ENCODE measurements at regions of chr11 and their contacts with region 1.

Region 1: DNA sequence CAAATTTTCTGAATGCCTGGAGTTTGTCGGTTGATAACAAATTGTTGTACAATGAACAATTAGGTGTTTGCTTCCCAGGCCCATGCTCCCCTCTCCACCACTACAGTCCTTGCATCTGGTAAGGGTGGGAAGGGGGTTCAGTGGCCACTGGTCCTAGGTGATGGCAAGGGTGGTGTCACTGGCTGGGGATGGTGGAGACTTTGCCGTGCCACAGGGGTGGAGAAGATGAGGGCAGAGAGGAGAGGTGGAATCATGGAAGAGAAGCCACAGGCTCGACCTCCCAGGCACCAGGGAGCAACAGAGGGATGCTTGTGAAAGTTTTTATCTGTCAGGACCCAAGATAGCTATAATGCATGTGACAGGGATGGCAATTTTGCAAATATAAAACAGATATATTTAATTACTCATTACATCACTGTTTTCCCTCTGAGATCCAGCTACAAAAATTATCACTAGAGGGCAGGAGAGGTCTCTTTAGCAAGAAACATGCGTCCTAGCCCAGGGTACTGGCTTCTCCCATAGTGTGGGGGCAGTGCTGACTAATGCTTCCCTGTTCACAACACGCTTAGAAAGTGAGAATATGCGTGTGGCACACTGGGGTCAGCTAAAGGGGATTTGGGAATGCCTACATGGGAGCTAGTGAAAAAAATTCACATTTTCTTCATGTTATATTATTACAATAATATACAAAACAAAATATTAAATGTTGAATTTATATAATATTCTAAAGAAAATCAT is 49.0 kb upstream of the AMPD3 start:
- DNase-seq: peak; percentile 58
- ATAC-seq: peak; percentile 77
- H3K4me3 Mint-ChIP-seq: no peak overlapping the region
- H3K27ac Mint-ChIP-seq: no peak overlapping the region
- H3K4me1 Mint-ChIP-seq: peaks cover 16% of the 10 kb centered on the region
- H3K27me3 Mint-ChIP-seq: no peaks in the 10 kb centered on the region

Region 2: GRCh38 chr11:10293423-10294289 is 112.4 kb before region 1 on chr11 and contains the start of gene SBF2:
- CTCF ChIA-PET with region 1: no interaction called
- DNase-seq: peak; percentile 83
- ATAC-seq: peak; percentile 68
- H3K4me3 Mint-ChIP-seq: peak within 1 kb of the TSS; percentile 70
- H3K27ac Mint-ChIP-seq: no peak within 1 kb of the TSS
- H3K4me1 Mint-ChIP-seq: peaks cover 34% of the 10 kb centered on the region
- H3K27me3 Mint-ChIP-seq: peaks cover 52% of the 10 kb centered on the region
- total RNA-seq, gene SBF2: 4.6 to 8.3 TPM

Region 3: GRCh38 chr11:10653926-10654810 is 248.1 kb after region 1 on chr11:
- CTCF ChIA-PET with region 1: interaction called, 111 read pairs
- DNase-seq: peak; percentile 48
- ATAC-seq: peak; percentile 77
- H3K4me3 Mint-ChIP-seq: no peak overlapping the region
- H3K27ac Mint-ChIP-seq: no peak overlapping the region
- H3K4me1 Mint-ChIP-seq: peaks cover 37% of the 10 kb centered on the region
- H3K27me3 Mint-ChIP-seq: no peaks in the 10 kb centered on the region